Panc1 (cell line): ENCODE measurements at regions of chr7 and their contacts with region 1.

Region 1: GRCh38 chr7:29415215-29415614 is 148.4 kb upstream of the PRR15 start:
- DNase-seq: no peak
- ATAC-seq: no peak
- H3K4me3 ChIP-seq: no peak overlapping the region
- H3K27ac ChIP-seq: no peak overlapping the region
- H3K4me1 ChIP-seq: no peaks in the 10 kb centered on the region
- H3K27me3 ChIP-seq: peaks cover 10% of the 10 kb centered on the region
- CTCF ChIP-seq: no peak

Region 2: DNA sequence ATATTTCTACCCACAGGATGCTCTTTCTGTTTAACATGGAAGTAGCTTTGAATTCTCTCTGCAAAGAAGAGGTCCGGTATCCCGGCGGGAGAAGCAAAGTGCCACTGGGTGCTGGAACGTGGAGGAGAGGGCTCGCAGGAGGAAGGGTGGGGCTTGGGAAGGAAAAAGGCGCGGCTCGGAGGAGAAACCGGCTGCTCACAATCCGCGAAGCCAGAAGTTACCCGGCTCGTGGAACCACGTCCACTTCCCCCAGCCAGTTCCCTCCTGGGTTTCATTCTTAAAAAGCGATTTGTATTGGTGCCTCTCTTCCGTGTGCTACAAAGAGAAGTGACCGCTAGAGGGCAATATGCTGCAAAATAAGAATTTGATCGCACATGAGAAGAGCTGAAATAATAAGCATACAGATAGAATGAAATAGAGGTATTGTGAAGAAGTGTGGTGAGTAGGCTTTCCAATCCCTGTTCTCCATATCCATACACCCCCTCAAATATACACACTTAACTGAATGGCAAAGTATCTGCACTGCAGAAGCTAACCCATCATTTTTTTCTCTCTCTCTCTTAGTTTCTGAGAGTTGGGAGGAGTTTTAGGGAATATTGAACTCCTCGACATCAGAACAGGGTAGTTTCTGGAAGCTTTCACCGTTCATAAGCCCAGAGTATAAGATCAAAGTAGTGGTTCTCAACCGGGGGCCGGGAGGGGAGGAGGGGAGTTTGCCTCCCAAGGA is 488.2 kb before region 1 on chr7:
- CTCF ChIA-PET with region 1: interaction called, 4 read pairs
- POLR2A ChIA-PET with region 1: interaction called, 15 read pairs
- in situ Hi-C with region 1: no loop called
- intact Hi-C with region 1: no loop called
- DNase-seq: peak; percentile 50
- ATAC-seq: peak; percentile 91
- H3K4me3 ChIP-seq: peak overlapping the region; percentile 40 to 58
- H3K27ac ChIP-seq: no peak overlapping the region
- H3K4me1 ChIP-seq: peaks cover 4% of the 10 kb centered on the region; the same call in 1 of the 2 replicates
- H3K27me3 ChIP-seq: peaks cover 26% of the 10 kb centered on the region
- CTCF ChIP-seq: peak; percentile 89